Activated T-helper 1 cell treated with anti-CD3 and anti-CD28 coated beads, Interleukin-12 subunit alpha, Interleukin-12 subunit beta, Interleukin-2, Interleukin-4 antibody, amounts not matched to agents 30 ng/mL and 10 ng/mL and 1 ng/mL, durations not matched to agents 14 hours and 24 hours and 36 hours (primary cell): ENCODE measurements at regions of chr10 and their contacts with region 1.

Region 1: DNA sequence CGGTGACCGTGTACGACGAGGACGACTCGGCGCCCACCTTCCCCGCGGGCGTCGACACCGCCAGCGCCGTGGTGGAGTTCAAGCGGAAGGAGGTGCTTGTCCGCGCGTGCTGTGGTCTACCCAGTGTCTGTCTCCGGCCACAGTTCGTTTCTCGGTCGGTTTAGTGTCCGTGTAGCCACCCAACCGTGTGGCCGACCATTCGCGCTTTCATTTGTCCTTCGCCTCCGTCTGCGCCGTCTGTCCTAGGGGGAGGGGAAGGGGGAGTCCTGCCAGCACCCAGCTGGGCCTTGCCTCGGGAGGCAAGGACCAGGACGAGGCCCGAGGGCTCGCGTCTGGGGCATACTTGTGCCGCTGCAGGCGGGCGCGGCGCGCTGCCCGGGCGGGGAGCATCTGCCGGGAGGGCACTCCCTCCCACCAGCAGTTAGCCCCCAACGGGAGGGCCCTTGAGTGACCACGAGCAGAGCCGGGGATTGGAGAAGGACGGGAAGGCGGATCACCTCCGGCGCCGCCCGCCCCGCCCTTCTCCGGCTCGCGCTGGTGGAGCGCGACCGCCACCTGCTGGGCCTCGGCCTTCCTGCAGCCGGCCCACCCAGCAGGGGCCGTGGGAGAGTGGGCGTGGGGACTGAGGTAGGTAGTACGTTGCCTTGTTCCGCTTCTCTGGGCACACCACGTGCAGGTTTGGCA is 28.4 kb downstream of the RET start:
- DNase-seq: peak; percentile 77
- H3K4me3 Mint-ChIP-seq: peak overlapping the region; percentile 73
- H3K27ac Mint-ChIP-seq: no peak overlapping the region
- H3K4me1 Mint-ChIP-seq: peaks cover 12% of the 10 kb centered on the region
- H3K27me3 Mint-ChIP-seq: peaks cover 21% of the 10 kb centered on the region

Region 2: DNA sequence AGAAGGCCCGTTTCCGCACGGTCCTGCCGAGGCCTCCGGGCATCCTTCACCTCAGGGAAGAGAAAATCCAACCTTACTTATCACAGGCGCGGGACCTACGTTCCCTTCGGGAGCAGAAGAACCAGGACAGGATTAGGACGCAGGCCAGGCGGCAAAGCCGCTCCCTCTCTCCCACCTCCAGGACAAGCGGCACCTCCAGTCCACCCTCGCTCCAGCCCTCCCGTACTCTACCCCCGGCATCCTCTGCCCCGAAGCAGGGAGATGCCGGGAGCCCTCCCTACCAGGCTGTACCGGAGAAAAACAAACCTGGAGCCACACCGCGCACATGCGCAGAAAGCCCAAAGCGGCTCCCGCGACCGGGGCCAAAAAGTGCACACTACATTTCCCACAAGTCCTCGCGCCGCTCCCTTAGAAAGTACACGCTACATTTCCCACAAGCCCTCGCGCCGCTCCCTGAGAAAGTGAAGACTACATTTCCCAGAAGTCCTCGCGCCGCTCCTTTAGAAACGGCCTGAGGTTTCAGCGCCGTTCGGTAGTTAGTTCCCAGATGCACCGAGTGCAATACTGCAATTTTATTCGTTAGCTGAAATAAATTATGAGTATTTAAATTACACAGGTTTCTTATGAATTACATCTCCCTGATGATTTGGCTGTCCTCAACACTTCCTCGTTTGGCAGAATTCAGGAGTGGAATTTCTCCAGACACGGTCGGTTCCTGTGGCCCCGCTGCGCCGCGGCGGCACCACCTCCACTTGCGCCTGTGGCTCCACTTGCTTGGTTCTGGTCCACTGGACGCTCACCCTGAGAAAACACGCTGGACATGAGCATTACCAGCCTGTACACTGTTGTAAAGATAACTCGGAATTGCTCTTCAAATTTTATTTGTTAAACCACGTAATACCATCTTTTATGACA is 552.5 kb before region 1 on chr10:
- intact Hi-C with region 1: loop called (anchors 1 kb)
- DNase-seq: peak; percentile 94
- H3K4me3 Mint-ChIP-seq: peak overlapping the region; percentile 99
- H3K27ac Mint-ChIP-seq: peak overlapping the region; percentile 98
- H3K4me1 Mint-ChIP-seq: peaks cover 38% of the 10 kb centered on the region
- H3K27me3 Mint-ChIP-seq: no peaks in the 10 kb centered on the region

Region 3: GRCh38 chr10:42753126-42753506 is 352.1 kb before region 1 on chr10:
- intact Hi-C with region 1: loop called (anchors 1 kb)
- DNase-seq: peak; percentile 55
- H3K4me3 Mint-ChIP-seq: peak overlapping the region; percentile 45
- H3K27ac Mint-ChIP-seq: no peak overlapping the region
- H3K4me1 Mint-ChIP-seq: peaks cover 5% of the 10 kb centered on the region
- H3K27me3 Mint-ChIP-seq: peaks cover 54% of the 10 kb centered on the region

Region 4: GRCh38 chr10:42866115-42866995 is 238.9 kb before region 1 on chr10:
- intact Hi-C with region 1: loop called (anchors 1 kb)
- DNase-seq: peak; percentile 29
- H3K4me3 Mint-ChIP-seq: no peak overlapping the region
- H3K27ac Mint-ChIP-seq: no peak overlapping the region
- H3K4me1 Mint-ChIP-seq: no peaks in the 10 kb centered on the region
- H3K27me3 Mint-ChIP-seq: peaks cover 27% of the 10 kb centered on the region

Region 5: GRCh38 chr10:43120929-43121314 is 15.7 kb after region 1 on chr10:
- intact Hi-C with region 1: loop called (anchors 1 kb)
- DNase-seq: peak; percentile 82
- H3K4me3 Mint-ChIP-seq: peak overlapping the region; percentile 54
- H3K27ac Mint-ChIP-seq: peak overlapping the region; percentile 90
- H3K4me1 Mint-ChIP-seq: peaks cover 65% of the 10 kb centered on the region
- H3K27me3 Mint-ChIP-seq: no peaks in the 10 kb centered on the region

Region 6: GRCh38 chr10:43648398-43649184 is 543.3 kb after region 1 on chr10 and contains the start of gene ZNF32:
- intact Hi-C with region 1: loop called (anchors 1 kb)
- DNase-seq: peak; percentile 78
- H3K4me3 Mint-ChIP-seq: peak within 1 kb of the TSS; percentile 89
- H3K27ac Mint-ChIP-seq: peak within 1 kb of the TSS; percentile 90
- H3K4me1 Mint-ChIP-seq: peaks cover 11% of the 10 kb centered on the region
- H3K27me3 Mint-ChIP-seq: peaks cover 11% of the 10 kb centered on the region
- total RNA-seq, gene ZNF32: 13.2 and 13.7 TPM in 2 replicates

Region 7: DNA sequence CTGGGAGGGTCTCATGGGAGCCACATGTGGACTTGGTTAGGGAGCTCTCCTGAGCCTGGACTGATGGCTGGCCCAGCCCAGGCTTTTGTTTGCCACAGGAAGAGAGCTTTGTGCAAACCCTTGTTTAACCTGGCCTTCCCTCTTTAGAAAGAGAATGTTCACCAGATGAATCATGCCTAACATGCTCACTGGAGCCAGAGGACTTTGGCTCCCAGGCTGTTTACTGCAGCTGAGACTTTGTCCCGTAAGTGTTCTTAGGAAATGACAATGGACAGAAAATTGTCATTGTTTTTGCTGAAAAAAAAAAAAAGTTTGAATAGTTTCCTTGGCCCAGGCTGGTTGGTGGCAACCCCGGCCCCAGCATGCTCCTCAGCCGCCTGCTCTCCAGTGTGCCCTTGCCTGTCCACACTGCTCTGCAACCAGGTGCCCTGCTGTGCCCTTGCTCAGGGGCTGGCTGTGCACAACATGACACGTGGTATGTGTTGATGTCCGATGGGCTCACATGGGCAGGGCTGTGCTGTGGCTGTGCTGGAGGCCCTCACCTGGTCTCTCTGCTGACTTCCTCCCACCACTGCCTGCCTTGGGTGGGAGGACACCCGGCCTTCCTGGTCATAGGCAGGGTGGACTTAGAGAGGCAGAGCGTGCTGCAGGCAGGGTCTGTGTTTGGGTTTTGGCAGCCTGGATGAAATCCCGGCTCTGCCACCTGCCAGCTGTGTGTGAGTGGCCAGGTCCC is 758.8 kb after region 1 on chr10:
- intact Hi-C with region 1: no loop called
- DNase-seq: no peak
- H3K4me3 Mint-ChIP-seq: no peak overlapping the region
- H3K27ac Mint-ChIP-seq: no peak overlapping the region
- H3K4me1 Mint-ChIP-seq: no peaks in the 10 kb centered on the region
- H3K27me3 Mint-ChIP-seq: no peaks in the 10 kb centered on the region